PC-9 (cell line): ENCODE measurements at regions of chr14 and their contacts with region 1.

Region 1: GRCh38 chr14:74671789-74672188 is 41.1 kb downstream of the AREL1 start:
- DNase-seq: peak in 1 of 2 experiments; percentile 80
- H3K4me3 ChIP-seq: no peak overlapping the region
- H3K27ac ChIP-seq: no peak overlapping the region
- H3K4me1 ChIP-seq: no peaks in the 10 kb centered on the region
- H3K27me3 ChIP-seq: no peaks in the 10 kb centered on the region
- CTCF ChIP-seq: no peak

Region 2: DNA sequence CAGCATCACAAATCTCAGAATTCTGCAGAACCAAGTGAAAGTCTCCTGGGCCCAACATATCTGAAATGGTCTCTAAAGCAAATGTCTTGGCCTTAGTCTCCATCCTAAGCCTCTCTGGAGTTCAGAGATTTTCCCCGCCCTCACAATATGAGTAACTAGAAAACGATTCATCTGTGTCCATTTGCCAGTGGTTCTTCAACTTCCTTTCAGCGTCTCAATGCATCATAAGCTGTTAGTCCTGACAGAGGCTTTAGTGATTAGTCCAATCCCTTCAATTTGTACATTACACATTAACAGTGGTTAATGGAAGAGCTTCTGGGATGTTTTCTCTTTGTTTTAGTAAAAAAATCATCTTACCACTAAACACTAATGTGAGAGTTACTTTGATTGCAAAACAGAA is 196.1 kb before region 1 on chr14:
- CTCF ChIA-PET with region 1: no interaction called
- POLR2A ChIA-PET with region 1: no interaction called
- intact Hi-C with region 1: no loop called
- DNase-seq: no peak
- H3K4me3 ChIP-seq: no peak overlapping the region
- H3K27ac ChIP-seq: no peak overlapping the region
- H3K4me1 ChIP-seq: no peaks in the 10 kb centered on the region
- H3K27me3 ChIP-seq: no peaks in the 10 kb centered on the region
- CTCF ChIP-seq: no peak

Region 3: GRCh38 chr14:74549588-74549987 is 122.2 kb before region 1 on chr14:
- CTCF ChIA-PET with region 1: interaction called, 3 read pairs
- POLR2A ChIA-PET with region 1: no interaction called
- intact Hi-C with region 1: loop called (anchors 5 kb)
- DNase-seq: peak; percentile 74 to 85
- H3K4me3 ChIP-seq: no peak overlapping the region
- H3K27ac ChIP-seq: peak overlapping the region; percentile 14
- H3K4me1 ChIP-seq: peaks cover 13% of the 10 kb centered on the region
- H3K27me3 ChIP-seq: no peaks in the 10 kb centered on the region
- CTCF ChIP-seq: peak; percentile 88

Region 4: GRCh38 chr14:74627076-74627475 is 44.7 kb before region 1 on chr14:
- CTCF ChIA-PET with region 1: no interaction called
- POLR2A ChIA-PET with region 1: interaction called, 22 read pairs
- intact Hi-C with region 1: no loop called
- DNase-seq: no peak
- H3K4me3 ChIP-seq: no peak overlapping the region
- H3K27ac ChIP-seq: no peak overlapping the region
- H3K4me1 ChIP-seq: peaks cover 15% of the 10 kb centered on the region
- H3K27me3 ChIP-seq: no peaks in the 10 kb centered on the region
- CTCF ChIP-seq: no peak

Region 5: DNA sequence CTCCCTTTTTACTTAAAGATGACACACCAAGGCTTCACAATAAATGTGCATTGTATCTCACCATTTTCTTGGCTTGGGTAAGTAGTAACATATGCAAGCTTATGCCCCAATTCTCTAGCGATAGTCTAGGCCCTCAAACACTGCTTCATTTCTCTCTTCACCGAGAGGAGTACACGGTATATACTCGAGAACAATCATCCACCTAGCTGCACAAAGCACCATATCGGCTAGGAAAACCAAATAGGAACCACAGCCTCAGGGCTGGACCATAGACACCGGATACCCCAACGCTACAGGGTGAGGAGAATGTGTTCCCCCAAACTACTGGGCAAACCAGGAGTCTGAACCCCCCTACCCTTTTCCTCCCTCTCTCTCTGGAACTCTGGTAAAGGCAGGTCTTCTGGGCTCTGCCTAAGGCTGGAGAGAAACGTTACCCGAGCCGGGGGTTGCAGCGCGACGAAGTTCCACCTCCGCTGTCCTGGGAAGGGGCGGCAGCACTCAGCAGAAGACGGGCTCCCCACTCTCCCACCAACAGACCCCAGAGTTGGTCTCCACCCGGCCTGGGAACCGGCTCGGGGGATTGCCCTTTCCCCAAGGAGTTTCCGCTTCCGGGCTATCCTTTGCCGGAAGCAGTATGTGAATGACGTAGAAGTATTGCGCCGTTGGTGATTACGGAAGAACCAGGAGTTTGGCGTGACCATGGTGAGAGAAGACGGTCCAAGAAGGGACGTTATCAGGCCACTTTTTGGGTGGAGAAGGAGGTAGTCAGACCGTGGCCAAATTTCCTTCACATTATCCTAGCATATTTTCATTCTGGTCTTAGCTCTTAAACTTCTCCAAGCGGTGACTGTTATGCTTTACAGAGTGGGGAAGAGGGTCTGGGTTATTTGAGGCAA is 41.0 kb after region 1 on chr14 and contains the starts of genes AREL1 and FCF1:
- CTCF ChIA-PET with region 1: no interaction called
- POLR2A ChIA-PET with region 1: interaction called, 9 read pairs
- intact Hi-C with region 1: loop called (anchors 2 kb)
- DNase-seq: peak; percentile 86 to 92
- H3K4me3 ChIP-seq: peak within 1 kb of the TSS; percentile 67
- H3K27ac ChIP-seq: peak within 1 kb of the TSS; percentile 27; the same call in 1 of the 2 replicates
- H3K4me1 ChIP-seq: peaks cover 21% of the 10 kb centered on the region
- H3K27me3 ChIP-seq: no peaks in the 10 kb centered on the region
- CTCF ChIP-seq: no peak
- total RNA-seq, gene AREL1: 98.4 and 108 TPM in 2 replicates
- total RNA-seq, gene FCF1: 175 and 191 TPM in 2 replicates

Region 6: GRCh38 chr14:74852927-74853514 is 181.2 kb after region 1 on chr14:
- CTCF ChIA-PET with region 1: no interaction called
- POLR2A ChIA-PET with region 1: no interaction called
- intact Hi-C with region 1: no loop called
- DNase-seq: peak in 1 of 2 experiments; percentile 55
- H3K4me3 ChIP-seq: no peak overlapping the region
- H3K27ac ChIP-seq: no peak overlapping the region
- H3K4me1 ChIP-seq: peaks cover 20% of the 10 kb centered on the region
- H3K27me3 ChIP-seq: no peaks in the 10 kb centered on the region
- CTCF ChIP-seq: no peak

Region 7: GRCh38 chr14:74988131-74988530 is 316.3 kb after region 1 on chr14:
- CTCF ChIA-PET with region 1: no interaction called
- POLR2A ChIA-PET with region 1: interaction called, 13 read pairs
- intact Hi-C with region 1: no loop called
- DNase-seq: peak; percentile 94 to 100
- H3K4me3 ChIP-seq: no peak overlapping the region
- H3K27ac ChIP-seq: peak overlapping the region; percentile 38
- H3K4me1 ChIP-seq: peaks cover 43% of the 10 kb centered on the region
- H3K27me3 ChIP-seq: no peaks in the 10 kb centered on the region
- CTCF ChIP-seq: no peak; the same call in 1 of the 2 replicates